Activated CD4-positive, alpha-beta T cell treated with anti-CD3 and anti-CD28 coated beads, Interleukin-2, amount 10 ng/mL, durations not matched to agents 24 days and 14 days (primary cell): ENCODE measurements at regions of chr3 and their contacts with region 1.

Region 1: GRCh38 chr3:106013971-106014370 is 145.2 kb upstream of the CBLB start:
- DNase-seq: no peak
- H3K4me3 Mint-ChIP-seq: no peak overlapping the region
- H3K27ac Mint-ChIP-seq: peak overlapping the region; percentile 51
- H3K4me1 Mint-ChIP-seq: peaks cover 31% of the 10 kb centered on the region
- H3K27me3 Mint-ChIP-seq: no peaks in the 10 kb centered on the region

Region 2: GRCh38 chr3:105676621-105677300 is 337.2 kb before region 1 on chr3:
- intact Hi-C with region 1: loop called (anchors 1 kb)
- DNase-seq: peak; percentile 48
- H3K4me3 Mint-ChIP-seq: no peak overlapping the region
- H3K27ac Mint-ChIP-seq: peak overlapping the region; percentile 89
- H3K4me1 Mint-ChIP-seq: peaks cover 26% of the 10 kb centered on the region
- H3K27me3 Mint-ChIP-seq: no peaks in the 10 kb centered on the region

Region 3: GRCh38 chr3:106049821-106050220 is 35.9 kb after region 1 on chr3:
- intact Hi-C with region 1: loop called (anchors 1 kb)
- DNase-seq: no peak
- H3K4me3 Mint-ChIP-seq: no peak overlapping the region
- H3K27ac Mint-ChIP-seq: no peak overlapping the region
- H3K4me1 Mint-ChIP-seq: peaks cover 9% of the 10 kb centered on the region
- H3K27me3 Mint-ChIP-seq: no peaks in the 10 kb centered on the region

Region 4: GRCh38 chr3:106119614-106120082 is 105.7 kb after region 1 on chr3:
- intact Hi-C with region 1: loop called (anchors 2 kb)
- DNase-seq: no peak
- H3K4me3 Mint-ChIP-seq: peak overlapping the region; percentile 46
- H3K27ac Mint-ChIP-seq: peak overlapping the region; percentile 87
- H3K4me1 Mint-ChIP-seq: peaks cover 28% of the 10 kb centered on the region
- H3K27me3 Mint-ChIP-seq: no peaks in the 10 kb centered on the region

Region 5: GRCh38 chr3:106215047-106215446 is 201.1 kb after region 1 on chr3:
- intact Hi-C with region 1: loop called (anchors 2 kb)
- DNase-seq: peak; percentile 64
- H3K4me3 Mint-ChIP-seq: peak overlapping the region; percentile 3
- H3K27ac Mint-ChIP-seq: peak overlapping the region; percentile 70
- H3K4me1 Mint-ChIP-seq: peaks cover 32% of the 10 kb centered on the region
- H3K27me3 Mint-ChIP-seq: no peaks in the 10 kb centered on the region

Region 6: DNA sequence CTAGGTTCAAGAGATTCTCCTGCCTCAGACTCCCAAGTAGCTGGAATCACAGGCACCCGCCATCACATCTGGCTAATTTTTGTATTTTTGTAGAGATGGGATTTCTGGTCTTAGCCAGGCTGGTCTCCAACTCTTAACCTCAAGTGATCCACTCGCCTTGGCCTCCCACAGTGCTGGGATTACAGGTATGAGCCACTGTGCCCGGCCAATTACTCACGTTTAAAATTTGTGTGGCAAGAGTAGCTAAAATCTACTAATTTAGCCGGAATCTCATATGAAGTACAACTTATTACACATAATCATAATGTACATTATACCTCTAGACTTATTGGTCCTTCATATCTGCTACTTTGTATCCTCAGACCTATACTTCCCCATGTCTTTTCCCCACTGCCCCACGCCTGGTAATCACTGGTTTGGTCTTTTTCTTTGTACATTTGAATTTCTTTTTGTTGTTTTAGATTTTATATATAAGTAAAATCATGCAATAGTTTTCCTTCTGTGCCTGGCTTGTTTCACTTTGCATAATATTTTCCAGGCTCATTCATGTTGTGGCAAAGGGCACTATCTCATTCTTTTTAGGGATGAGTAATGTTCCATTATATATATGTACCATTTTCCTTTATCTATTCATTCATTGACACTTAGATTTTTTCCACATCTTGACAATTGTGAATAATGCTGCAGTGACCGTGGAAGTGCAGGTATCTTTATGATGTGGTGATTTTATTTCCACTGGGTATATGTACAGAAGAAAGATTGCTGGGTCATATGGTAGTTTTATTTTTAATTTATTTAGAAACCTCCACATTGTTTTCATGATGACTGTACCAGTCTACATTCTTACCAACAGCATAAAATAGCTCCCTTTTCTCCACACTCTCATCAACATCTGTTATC is 459.9 kb after region 1 on chr3:
- intact Hi-C with region 1: loop called (anchors 5 kb)
- DNase-seq: no peak
- H3K4me3 Mint-ChIP-seq: no peak overlapping the region
- H3K27ac Mint-ChIP-seq: peak overlapping the region; percentile 83
- H3K4me1 Mint-ChIP-seq: peaks cover 8% of the 10 kb centered on the region
- H3K27me3 Mint-ChIP-seq: no peaks in the 10 kb centered on the region